WTC11 (cell line): ENCODE measurements at regions of chr7 and their contacts with region 1.

Region 1: GRCh38 chr7:4973728-4974198 is 14.8 kb upstream of the MMD2 start:
- DNase-seq: peak; percentile 95
- ATAC-seq: peak; percentile 98
- H3K4me3 Mint-ChIP-seq: peak overlapping the region; percentile 93
- H3K27ac Mint-ChIP-seq: peak overlapping the region; percentile 94
- H3K4me1 Mint-ChIP-seq: no peaks in the 10 kb centered on the region
- H3K27me3 Mint-ChIP-seq: no peaks in the 10 kb centered on the region; the same call in 1 of the 2 replicates
- CTCF ChIP-seq: peak; percentile 81; the same call in 1 of the 2 replicates

Region 2: DNA sequence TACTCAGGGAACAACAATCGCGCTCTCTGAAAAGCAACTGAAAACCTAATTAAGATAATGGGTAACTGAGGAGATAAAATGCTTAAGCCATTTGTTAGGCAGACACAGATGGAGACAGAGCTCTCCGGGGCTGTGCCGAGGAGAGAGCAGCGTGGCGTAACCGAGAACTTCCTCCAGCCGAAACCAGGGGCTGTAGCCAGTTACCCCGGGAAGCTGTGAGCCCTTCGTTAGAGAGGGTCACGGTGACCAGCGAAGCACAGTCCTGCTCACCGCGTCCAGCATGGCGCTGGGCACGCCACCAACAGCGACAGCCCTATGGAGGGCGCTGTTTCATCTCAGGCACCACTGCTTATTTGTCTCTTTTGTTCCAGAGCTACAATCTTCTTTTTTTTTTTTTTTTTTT is 128.0 kb before region 1 on chr7:
- CTCF ChIA-PET with region 1: interaction called, 15 read pairs
- POLR2A ChIA-PET with region 1: no interaction called
- DNase-seq: peak; percentile 79
- ATAC-seq: peak; percentile 96
- H3K4me3 Mint-ChIP-seq: no peak overlapping the region
- H3K27ac Mint-ChIP-seq: peak overlapping the region; percentile 49; the same call in 1 of the 2 replicates
- H3K4me1 Mint-ChIP-seq: peaks cover 7% of the 10 kb centered on the region
- H3K27me3 Mint-ChIP-seq: no peaks in the 10 kb centered on the region
- CTCF ChIP-seq: peak; percentile 43; the same call in 1 of the 2 replicates

Region 3: DNA sequence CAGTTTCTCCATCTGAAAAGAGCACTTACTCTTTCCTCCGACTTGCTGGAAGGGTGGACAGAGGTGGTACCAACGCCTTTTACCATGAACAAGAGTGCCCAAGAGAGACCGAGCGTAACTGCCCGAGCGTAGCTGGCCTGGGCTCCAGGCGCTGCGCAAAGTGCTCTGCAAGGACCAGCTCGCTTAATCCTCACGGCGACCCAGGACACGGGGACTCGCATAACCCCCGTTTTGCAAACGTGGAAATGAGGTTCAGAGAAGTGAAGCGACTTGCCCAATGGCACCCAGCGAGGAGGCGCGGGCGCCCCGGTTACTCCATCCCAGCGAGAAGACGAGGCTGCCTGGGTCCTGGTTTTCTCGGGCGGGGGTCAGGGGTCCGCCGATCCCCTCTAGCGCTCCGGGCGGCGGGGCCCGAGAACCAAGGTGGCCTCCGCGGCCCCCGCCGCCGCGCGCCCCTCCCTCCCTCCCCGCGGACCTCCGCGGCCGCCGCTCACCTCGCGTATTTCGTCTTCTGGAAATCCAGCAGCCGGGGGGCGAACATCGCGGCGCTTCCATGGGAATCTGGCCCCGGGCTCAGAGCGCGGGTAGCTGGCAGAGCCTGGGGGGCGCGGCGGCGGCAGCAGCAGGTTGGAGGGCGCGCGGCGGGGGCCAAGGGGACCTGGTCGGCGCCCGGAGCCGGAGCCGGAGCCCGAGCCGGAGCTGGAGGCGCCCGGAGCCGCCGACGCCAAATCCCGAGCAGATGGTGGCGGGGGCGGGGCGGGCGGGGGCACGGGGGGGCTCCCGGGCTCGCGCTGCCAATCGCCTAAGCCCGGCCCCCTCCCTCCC is 15.1 kb before region 1 on chr7 and contains the start of gene MMD2:
- CTCF ChIA-PET with region 1: interaction called, 25 read pairs
- POLR2A ChIA-PET with region 1: no interaction called
- DNase-seq: peak; percentile 55
- ATAC-seq: peak; percentile 51
- H3K4me3 Mint-ChIP-seq: peak within 1 kb of the TSS; percentile 85
- H3K27ac Mint-ChIP-seq: no peak within 1 kb of the TSS
- H3K4me1 Mint-ChIP-seq: peaks cover 4% of the 10 kb centered on the region
- H3K27me3 Mint-ChIP-seq: peaks cover 40% of the 10 kb centered on the region
- CTCF ChIP-seq: no peak
- total RNA-seq, gene MMD2: 0.09 TPM in 1 of 3 replicates, not detected in the others

Region 4: GRCh38 chr7:5045558-5046396 is 72.0 kb after region 1 on chr7 and contains the start of gene RBAK:
- CTCF ChIA-PET with region 1: interaction called, 15 read pairs
- POLR2A ChIA-PET with region 1: interaction called, 7 read pairs
- DNase-seq: peak; percentile 96
- ATAC-seq: peak; percentile 98
- H3K4me3 Mint-ChIP-seq: peak within 1 kb of the TSS; percentile 88
- H3K27ac Mint-ChIP-seq: peak within 1 kb of the TSS; percentile 60
- H3K4me1 Mint-ChIP-seq: peaks cover 10% of the 10 kb centered on the region
- H3K27me3 Mint-ChIP-seq: peaks cover 16% of the 10 kb centered on the region
- CTCF ChIP-seq: no peak
- total RNA-seq, gene RBAK: 13.5 to 14.5 TPM (median 14.2 TPM) in 3 replicates

Region 5: DNA sequence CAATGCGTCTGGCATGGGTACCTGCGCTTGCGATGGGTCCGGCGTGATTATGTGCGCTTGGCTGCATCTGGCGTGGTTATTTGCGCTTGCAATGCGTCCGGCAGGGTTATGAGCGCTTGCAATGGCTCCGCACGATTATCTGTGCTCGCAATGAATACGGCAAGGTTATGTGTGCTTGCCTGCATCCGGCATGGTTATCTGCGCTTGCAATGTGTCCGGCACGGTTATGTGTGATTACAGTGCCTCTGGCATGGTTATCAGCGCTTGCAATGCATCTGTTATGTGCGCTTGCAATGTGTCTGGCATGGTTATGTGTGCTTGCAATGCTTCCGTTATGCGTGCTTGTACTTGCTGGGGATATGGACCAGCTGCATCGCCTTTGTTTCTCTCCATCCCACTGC is 109.5 kb after region 1 on chr7:
- CTCF ChIA-PET with region 1: interaction called, 48 read pairs
- POLR2A ChIA-PET with region 1: interaction called, 8 read pairs
- DNase-seq: no peak
- ATAC-seq: no peak
- H3K4me3 Mint-ChIP-seq: no peak overlapping the region
- H3K27ac Mint-ChIP-seq: no peak overlapping the region
- H3K4me1 Mint-ChIP-seq: no peaks in the 10 kb centered on the region
- H3K27me3 Mint-ChIP-seq: peaks cover 22% of the 10 kb centered on the region
- CTCF ChIP-seq: no peak

Region 6: GRCh38 chr7:5088906-5089305 is 115.1 kb after region 1 on chr7:
- CTCF ChIA-PET with region 1: interaction called, 48 read pairs
- POLR2A ChIA-PET with region 1: interaction called, 8 read pairs
- DNase-seq: no peak
- ATAC-seq: no peak
- H3K4me3 Mint-ChIP-seq: peak overlapping the region; percentile 6; the same call in 1 of the 2 replicates
- H3K27ac Mint-ChIP-seq: peak overlapping the region; percentile 23; the same call in 1 of the 2 replicates
- H3K4me1 Mint-ChIP-seq: peaks cover 6% of the 10 kb centered on the region; the same call in 1 of the 2 replicates
- H3K27me3 Mint-ChIP-seq: peaks cover 25% of the 10 kb centered on the region
- CTCF ChIP-seq: no peak